CD8-positive, alpha-beta T cell (primary cell): ENCODE measurements at regions of chr17 and their contacts with region 1.

Region 1: DNA sequence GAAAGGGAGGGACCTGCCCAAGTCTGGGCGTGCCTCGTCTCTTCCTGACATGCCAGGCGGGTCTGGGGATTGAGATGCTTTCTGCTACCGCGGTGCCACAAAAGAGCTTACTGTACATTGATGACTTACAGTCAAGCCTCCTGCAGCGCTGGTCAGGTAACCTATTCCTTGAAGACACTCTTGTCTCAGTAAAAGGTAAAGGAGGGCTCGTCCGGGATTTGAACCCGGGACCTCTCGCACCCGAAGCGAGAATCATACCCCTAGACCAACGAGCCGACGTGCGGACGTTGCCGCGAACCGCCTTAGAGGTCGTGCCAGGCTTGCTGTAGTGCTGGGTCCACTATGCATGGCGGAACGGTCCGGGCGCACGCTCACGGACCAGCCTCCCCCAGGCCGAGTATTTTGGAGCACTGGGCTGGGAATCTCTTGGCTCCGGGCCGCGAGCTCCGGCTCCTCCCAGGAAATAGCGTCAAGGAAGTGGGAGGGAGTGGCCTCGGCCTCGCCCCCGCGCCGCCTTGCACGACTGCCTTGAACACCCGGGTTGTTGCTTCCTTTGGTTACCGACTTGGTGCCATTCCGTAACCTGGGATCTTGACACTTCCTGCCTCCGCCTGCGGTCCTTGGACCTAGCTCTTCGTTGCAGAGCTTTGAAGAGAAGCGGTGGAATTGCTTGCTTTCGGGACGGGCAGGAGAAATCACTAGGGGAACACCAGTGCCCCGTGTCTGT is 12.4 kb upstream of the AURKB start:
- DNase-seq: peak; percentile 82 to 93 (median 90)
- ATAC-seq: peak; percentile 47
- H3K4me3 ChIP-seq: peak overlapping the region; percentile 80 to 93
- H3K4me3 Mint-ChIP-seq: peak overlapping the region; percentile 92
- H3K27ac ChIP-seq: peak overlapping the region; percentile 90 to 98
- H3K27ac Mint-ChIP-seq: peak overlapping the region; percentile 97
- H3K4me1 ChIP-seq: peaks cover 43% of the 10 kb centered on the region
- H3K4me1 Mint-ChIP-seq: peaks cover 61% of the 10 kb centered on the region
- H3K27me3 ChIP-seq: no peaks in the 10 kb centered on the region
- H3K27me3 Mint-ChIP-seq: no peaks in the 10 kb centered on the region
- CTCF ChIP-seq: no peak

Region 2: DNA sequence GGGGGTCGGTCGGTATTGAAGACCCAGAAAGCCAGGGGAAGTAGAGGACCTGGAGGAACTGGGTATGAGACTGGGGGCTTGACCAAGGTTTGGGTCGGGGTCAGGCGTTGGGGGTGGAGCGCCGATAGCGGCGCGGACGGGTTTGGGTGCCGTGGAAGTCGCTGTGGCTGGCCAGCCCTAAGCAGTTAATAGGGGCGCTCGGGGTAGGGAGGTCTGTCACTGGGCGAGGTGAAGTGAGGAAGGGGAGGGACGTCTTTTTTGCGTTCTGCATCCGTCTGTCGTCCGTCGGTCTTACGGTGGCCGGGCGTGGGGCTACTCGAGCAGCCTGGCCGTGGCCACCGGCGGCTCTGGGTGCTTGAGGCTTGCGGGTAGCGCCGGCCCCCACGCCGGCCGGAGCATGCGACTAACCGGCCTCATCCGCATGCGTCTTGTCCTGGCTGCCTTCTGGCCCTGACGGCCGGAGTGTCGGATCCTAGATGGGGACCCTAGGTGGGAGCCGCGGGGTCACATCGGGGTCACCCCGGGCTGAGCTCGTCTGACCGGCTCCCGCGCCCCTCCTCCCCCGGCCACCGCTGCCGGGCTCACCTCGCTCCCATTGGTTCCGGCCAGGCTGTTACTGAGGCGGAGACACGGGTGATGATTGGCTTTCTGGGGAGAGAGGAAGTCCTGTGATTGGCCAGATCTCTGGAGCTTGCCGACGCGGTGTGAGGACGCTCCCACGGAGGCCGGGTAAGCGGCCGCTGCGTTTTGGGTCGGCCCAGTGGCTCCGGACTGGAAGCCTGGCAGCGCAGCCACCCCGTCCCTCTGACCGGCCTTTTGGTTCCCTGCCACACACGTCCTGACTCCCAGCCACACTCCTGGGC is 378.3 kb before region 1 on chr17:
- CTCF ChIA-PET with region 1: no interaction called
- POLR2A ChIA-PET with region 1: no interaction called
- intact Hi-C with region 1: loop called in 1 of 2 experiments (anchors 10 kb)
- DNase-seq: peak; percentile 67 to 94 (median 79)
- ATAC-seq: peak; percentile 8
- H3K4me3 ChIP-seq: peak overlapping the region; percentile 94 to 98
- H3K4me3 Mint-ChIP-seq: peak overlapping the region; percentile 91
- H3K27ac ChIP-seq: peak overlapping the region; percentile 98 to 100
- H3K27ac Mint-ChIP-seq: peak overlapping the region; percentile 99
- H3K4me1 ChIP-seq: peaks cover 39% of the 10 kb centered on the region
- H3K4me1 Mint-ChIP-seq: peaks cover 33% of the 10 kb centered on the region
- H3K27me3 ChIP-seq: no peaks in the 10 kb centered on the region
- H3K27me3 Mint-ChIP-seq: no peaks in the 10 kb centered on the region
- CTCF ChIP-seq: no peak

Region 3: GRCh38 chr17:8062807-8063483 is 159.8 kb before region 1 on chr17:
- CTCF ChIA-PET with region 1: no interaction called
- POLR2A ChIA-PET with region 1: no interaction called
- intact Hi-C with region 1: no loop called
- DNase-seq: no peak
- ATAC-seq: no peak
- H3K4me3 ChIP-seq: no peak overlapping the region
- H3K4me3 Mint-ChIP-seq: no peak overlapping the region
- H3K27ac ChIP-seq: no peak overlapping the region
- H3K27ac Mint-ChIP-seq: no peak overlapping the region
- H3K4me1 ChIP-seq: no peaks in the 10 kb centered on the region
- H3K4me1 Mint-ChIP-seq: no peaks in the 10 kb centered on the region
- H3K27me3 ChIP-seq: peaks cover 0 to 5% of the 10 kb centered on the region in 2 experiments
- H3K27me3 Mint-ChIP-seq: peaks cover 53% of the 10 kb centered on the region
- CTCF ChIP-seq: no peak

Region 4: DNA sequence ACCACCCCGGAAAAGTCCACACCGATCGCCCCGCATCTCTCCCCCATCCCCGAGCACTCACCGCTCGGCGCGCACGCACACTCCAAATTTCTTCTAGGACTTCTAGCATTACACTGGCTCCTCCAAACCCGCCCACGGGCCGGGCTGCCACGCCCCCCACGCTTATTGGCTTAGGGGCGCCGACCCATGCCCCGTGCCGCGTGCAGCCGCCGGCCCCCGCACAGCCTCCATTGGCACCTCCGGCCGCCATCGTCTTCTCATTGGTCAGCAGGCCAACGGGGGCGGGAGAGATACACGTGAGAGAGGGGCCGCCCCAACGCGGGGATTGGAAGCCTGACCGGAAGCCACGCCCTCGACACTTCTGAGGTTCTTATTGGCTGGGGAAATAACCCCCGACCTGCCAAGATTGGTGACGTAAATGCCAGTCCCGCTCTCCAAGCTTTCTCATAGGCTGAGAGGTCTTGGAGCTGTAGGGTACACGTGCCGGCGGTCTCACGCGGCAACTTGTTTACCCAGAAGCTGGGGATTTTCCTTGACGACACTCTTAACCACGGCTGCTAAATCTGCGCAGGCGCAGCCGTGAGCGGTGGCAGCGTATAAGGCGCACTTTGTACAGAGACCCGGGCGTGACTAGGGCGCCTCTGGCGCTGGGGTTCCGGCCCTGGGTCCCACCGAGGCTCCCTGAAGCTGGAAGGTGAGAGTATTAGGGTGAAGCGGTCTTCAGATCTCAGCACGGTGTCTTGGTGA is 66.4 kb before region 1 on chr17:
- CTCF ChIA-PET with region 1: interaction called, 13 read pairs
- POLR2A ChIA-PET with region 1: interaction called, 48 read pairs
- intact Hi-C with region 1: loop called in 1 of 2 experiments (anchors 1 kb)
- DNase-seq: peak; percentile 100
- ATAC-seq: peak; percentile 68
- H3K4me3 ChIP-seq: peak overlapping the region; percentile 82 to 90
- H3K4me3 Mint-ChIP-seq: no peak overlapping the region
- H3K27ac ChIP-seq: peak overlapping the region; percentile 100
- H3K27ac Mint-ChIP-seq: no peak overlapping the region
- H3K4me1 ChIP-seq: peaks cover 77% of the 10 kb centered on the region
- H3K4me1 Mint-ChIP-seq: peaks cover 68% of the 10 kb centered on the region
- H3K27me3 ChIP-seq: no peaks in the 10 kb centered on the region
- H3K27me3 Mint-ChIP-seq: no peaks in the 10 kb centered on the region
- CTCF ChIP-seq: no peak

Region 5: DNA sequence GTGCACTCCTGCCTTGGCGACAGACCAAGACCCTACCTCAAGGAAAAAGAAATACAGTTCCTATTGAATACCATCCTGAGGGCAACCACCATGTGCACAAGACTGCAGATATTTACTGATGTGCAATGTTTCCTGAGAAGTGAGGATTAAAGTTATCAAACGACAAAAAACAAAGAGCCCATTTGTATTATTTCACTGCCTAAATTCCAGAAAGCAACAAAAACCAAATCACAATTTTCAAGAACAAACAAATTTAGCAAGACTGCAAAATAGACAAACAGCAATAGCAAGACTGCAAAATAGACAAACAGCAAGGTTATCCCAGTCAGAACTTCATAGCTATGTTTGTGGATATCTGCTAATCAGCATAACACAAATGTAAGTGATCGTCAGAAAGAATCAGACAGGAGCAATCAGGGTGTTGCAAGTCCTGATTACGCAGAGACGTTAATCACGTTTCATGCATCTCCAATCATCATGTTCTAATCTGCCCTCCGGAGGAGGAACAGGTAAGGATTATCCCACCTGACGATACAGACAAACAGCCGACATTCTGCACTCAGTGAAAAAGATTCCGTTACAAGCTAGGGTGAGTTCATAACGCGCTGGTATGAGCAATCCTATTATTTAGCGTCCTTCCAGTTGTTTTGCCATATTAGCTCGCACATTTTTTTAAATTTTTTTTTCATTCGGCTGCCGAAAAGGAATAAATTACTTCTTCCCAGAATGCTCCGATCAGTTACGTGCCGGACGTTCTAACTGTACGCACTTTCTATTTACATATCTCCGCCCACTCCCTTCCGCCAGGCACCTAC is 49.5 kb before region 1 on chr17:
- CTCF ChIA-PET with region 1: interaction called, 7 read pairs
- POLR2A ChIA-PET with region 1: interaction called, 26 read pairs
- intact Hi-C with region 1: loop called (anchors 1 to 5 kb)
- DNase-seq: peak in 7 of 9 experiments; percentile 61 to 96 (median 80)
- ATAC-seq: peak; percentile 84
- H3K4me3 ChIP-seq: peak overlapping the region; percentile 39 to 46
- H3K4me3 Mint-ChIP-seq: peak overlapping the region; percentile 83
- H3K27ac ChIP-seq: peak overlapping the region; percentile 94 to 98
- H3K27ac Mint-ChIP-seq: peak overlapping the region; percentile 100
- H3K4me1 ChIP-seq: peaks cover 40% of the 10 kb centered on the region
- H3K4me1 Mint-ChIP-seq: peaks cover 50% of the 10 kb centered on the region
- H3K27me3 ChIP-seq: no peaks in the 10 kb centered on the region
- H3K27me3 Mint-ChIP-seq: no peaks in the 10 kb centered on the region
- CTCF ChIP-seq: no peak

Region 6: GRCh38 chr17:8204761-8205555 is 17.8 kb before region 1 on chr17:
- CTCF ChIA-PET with region 1: interaction called, 5 read pairs
- POLR2A ChIA-PET with region 1: interaction called, 36 read pairs
- intact Hi-C with region 1: loop called in 1 of 2 experiments (anchors 1 kb)
- DNase-seq: no peak
- ATAC-seq: no peak
- H3K4me3 ChIP-seq: no peak overlapping the region
- H3K4me3 Mint-ChIP-seq: no peak overlapping the region
- H3K27ac ChIP-seq: no peak overlapping the region
- H3K27ac Mint-ChIP-seq: no peak overlapping the region
- H3K4me1 ChIP-seq: peaks cover 2% of the 10 kb centered on the region
- H3K4me1 Mint-ChIP-seq: peaks cover 7% of the 10 kb centered on the region
- H3K27me3 ChIP-seq: no peaks in the 10 kb centered on the region
- H3K27me3 Mint-ChIP-seq: no peaks in the 10 kb centered on the region
- CTCF ChIP-seq: no peak

Region 7: GRCh38 chr17:8243827-8244226 is 21.0 kb after region 1 on chr17:
- CTCF ChIA-PET with region 1: interaction called, 45 read pairs
- POLR2A ChIA-PET with region 1: interaction called, 248 read pairs
- intact Hi-C with region 1: loop called (anchors 1 kb)
- DNase-seq: peak in 4 of 9 experiments; percentile 24 to 48 (median 36)
- ATAC-seq: no peak
- H3K4me3 ChIP-seq: no peak overlapping the region
- H3K4me3 Mint-ChIP-seq: peak overlapping the region; percentile 52
- H3K27ac ChIP-seq: peak overlapping the region in 1 of 2 experiments; percentile 32
- H3K27ac Mint-ChIP-seq: peak overlapping the region; percentile 88
- H3K4me1 ChIP-seq: peaks cover 41% of the 10 kb centered on the region
- H3K4me1 Mint-ChIP-seq: peaks cover 58% of the 10 kb centered on the region
- H3K27me3 ChIP-seq: no peaks in the 10 kb centered on the region
- H3K27me3 Mint-ChIP-seq: no peaks in the 10 kb centered on the region
- CTCF ChIP-seq: no peak

Region 8: GRCh38 chr17:8300627-8301242 is 77.9 kb after region 1 on chr17:
- CTCF ChIA-PET with region 1: interaction called, 28 read pairs
- POLR2A ChIA-PET with region 1: interaction called, 39 read pairs
- intact Hi-C with region 1: loop called (anchors 1 kb)
- DNase-seq: peak; percentile 29 to 86 (median 63)
- ATAC-seq: peak; percentile 93
- H3K4me3 ChIP-seq: no peak overlapping the region
- H3K4me3 Mint-ChIP-seq: no peak overlapping the region
- H3K27ac ChIP-seq: no peak overlapping the region
- H3K27ac Mint-ChIP-seq: peak overlapping the region; percentile 55
- H3K4me1 ChIP-seq: peaks cover 4% of the 10 kb centered on the region
- H3K4me1 Mint-ChIP-seq: peaks cover 9% of the 10 kb centered on the region
- H3K27me3 ChIP-seq: no peaks in the 10 kb centered on the region
- H3K27me3 Mint-ChIP-seq: no peaks in the 10 kb centered on the region
- CTCF ChIP-seq: peak; percentile 76